ENCODE measurements at regions of chr12 and their contacts with region 1.

Region 1: DNA sequence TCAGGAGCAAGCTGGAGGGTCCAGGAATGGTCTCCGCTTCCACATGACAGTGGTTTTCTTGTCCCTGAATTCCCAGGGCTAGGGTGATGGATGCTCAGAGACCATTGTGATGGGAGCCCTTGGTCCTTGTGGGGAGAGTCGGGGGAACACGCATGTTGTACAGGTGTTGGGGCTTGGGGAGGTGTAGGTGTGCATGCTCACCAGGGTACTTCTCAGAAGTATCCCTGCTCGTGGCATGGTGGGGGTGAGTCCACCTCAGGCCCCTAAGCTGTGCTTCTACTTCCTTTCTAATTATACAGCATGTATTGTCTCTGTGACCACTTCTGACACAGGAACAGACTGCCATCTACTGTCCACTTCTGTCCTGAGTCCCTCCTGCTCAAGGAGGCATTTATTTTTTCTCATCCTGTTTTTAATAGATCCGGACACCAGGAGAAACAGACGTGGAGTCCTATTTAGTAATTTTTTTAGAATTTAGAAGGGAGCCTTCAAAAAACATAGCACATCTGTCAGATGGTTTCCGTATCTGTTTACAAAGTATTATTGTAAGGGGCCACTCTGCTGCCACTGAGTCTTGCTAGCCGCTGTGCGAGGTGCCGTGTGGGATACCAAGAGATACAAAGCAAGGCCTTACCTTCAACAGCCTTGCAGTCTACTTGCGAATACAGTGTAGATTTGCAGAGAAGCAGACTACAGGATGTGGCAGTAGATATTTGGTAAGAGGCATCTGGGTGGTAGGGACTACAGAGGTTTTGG is 10.5 kb downstream of the NTF3 start:
- DNase-seq: peak; percentile 55
- H3K4me3 ChIP-seq: no peak overlapping the region
- H3K27ac ChIP-seq: no peak overlapping the region
- H3K4me1 ChIP-seq: no peaks in the 10 kb centered on the region
- H3K27me3 ChIP-seq: no peaks in the 10 kb centered on the region
- CTCF ChIP-seq: peak; percentile 16 to 81 (median 75)
- POLR2A ChIP-seq: no peak

Region 2: GRCh38 chr12:5200278-5201087 is 241.9 kb before region 1 on chr12:
- intact Hi-C with region 1: loop called (anchors 5 kb)
- DNase-seq: peak; percentile 59
- H3K4me3 ChIP-seq: no peak overlapping the region
- H3K27ac ChIP-seq: no peak overlapping the region
- H3K4me1 ChIP-seq: no peaks in the 10 kb centered on the region
- H3K27me3 ChIP-seq: no peaks in the 10 kb centered on the region
- CTCF ChIP-seq: peak; percentile 29 to 76 (median 71)
- POLR2A ChIP-seq: no peak

Measured in prostate gland (tissue), 2 donors.